ENCODE measurements at regions of chr11 and their contacts with region 1.

Region 1: DNA sequence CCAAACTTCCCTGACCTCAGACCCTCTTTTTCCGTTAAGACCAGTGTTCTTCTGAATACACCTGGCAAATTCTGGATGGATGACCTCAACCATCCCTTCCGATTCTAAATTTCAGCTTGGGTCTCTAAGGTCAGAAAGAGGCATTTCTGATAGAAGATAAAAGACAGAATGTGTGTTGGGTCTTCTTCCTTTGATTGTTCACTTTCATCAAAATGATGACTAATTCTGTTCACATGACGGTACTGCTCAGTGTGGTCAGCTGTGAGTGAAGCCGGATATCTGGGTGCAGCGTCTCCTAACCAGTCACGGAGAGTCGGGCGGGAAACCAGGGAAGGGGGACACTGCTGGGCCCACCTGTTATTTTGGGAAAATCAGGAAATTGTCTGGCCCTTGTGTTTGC is 151.6 kb upstream of the NAV2 start:
- DNase-seq: no peak
- H3K4me3 Mint-ChIP-seq: no peak overlapping the region
- H3K27ac Mint-ChIP-seq: no peak overlapping the region
- H3K4me1 Mint-ChIP-seq: no peaks in the 10 kb centered on the region
- H3K27me3 Mint-ChIP-seq: peaks cover under 1% of the 10 kb centered on the region

Region 2: GRCh38 chr11:19605520-19606371 is 44.7 kb after region 1 on chr11:
- CTCF ChIA-PET with region 1: no interaction called
- POLR2A ChIA-PET with region 1: no interaction called
- DNase-seq: no peak
- H3K4me3 Mint-ChIP-seq: no peak overlapping the region
- H3K27ac Mint-ChIP-seq: no peak overlapping the region
- H3K4me1 Mint-ChIP-seq: no peaks in the 10 kb centered on the region
- H3K27me3 Mint-ChIP-seq: no peaks in the 10 kb centered on the region

Region 3: DNA sequence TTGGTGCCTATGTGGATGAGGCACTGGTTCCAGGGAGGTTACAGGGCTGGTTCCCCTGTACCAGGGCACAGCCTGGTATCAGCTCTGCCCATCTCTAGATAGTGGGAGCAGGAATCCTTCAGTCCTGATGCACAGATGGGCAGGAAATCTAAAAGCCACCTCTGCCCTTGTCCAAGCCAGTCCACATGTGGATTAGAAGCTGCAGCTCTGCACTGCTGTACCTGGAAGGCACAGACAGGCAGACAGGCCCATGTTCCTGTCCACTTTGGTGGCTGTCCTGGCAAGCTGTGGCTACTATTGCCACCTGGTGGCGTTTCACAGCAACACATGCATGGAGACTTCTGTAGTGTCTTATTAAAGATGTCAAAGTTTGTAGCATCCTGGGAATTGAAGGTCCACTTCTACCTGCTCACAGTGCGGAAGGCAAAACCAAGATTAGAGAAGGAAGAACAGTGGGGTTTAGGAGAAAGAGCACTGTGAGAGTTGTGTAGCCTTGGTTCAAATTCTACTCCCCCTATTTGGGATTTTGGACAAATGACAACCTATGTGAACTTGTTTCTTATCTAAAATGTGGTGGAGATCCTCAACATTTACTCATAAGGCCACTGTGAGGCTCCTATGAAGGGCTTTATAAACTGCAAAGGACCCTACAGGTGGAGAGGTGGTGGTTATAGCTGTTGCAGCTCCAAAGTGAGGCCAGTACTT is 181.7 kb after region 1 on chr11:
- CTCF ChIA-PET with region 1: interaction called, 11 read pairs
- POLR2A ChIA-PET with region 1: no interaction called
- DNase-seq: peak; percentile 71
- H3K4me3 Mint-ChIP-seq: no peak overlapping the region
- H3K27ac Mint-ChIP-seq: no peak overlapping the region
- H3K4me1 Mint-ChIP-seq: no peaks in the 10 kb centered on the region
- H3K27me3 Mint-ChIP-seq: peaks cover 4% of the 10 kb centered on the region